ENCODE measurements at regions of chr20 and their contacts with region 1.

Region 1: GRCh38 chr20:52379723-52380336 is 188.3 kb upstream of the ZFP64 start:
- DNase-seq: peak in 3 of 10 donors; percentile 14 to 69 (median 26)

Region 2: GRCh38 chr20:52242237-52243230 is 137.3 kb before region 1 on chr20:
- intact Hi-C with region 1: loop called (anchors 10 kb)
- DNase-seq: no peak

Region 3: GRCh38 chr20:52312132-52312729 is 67.6 kb before region 1 on chr20:
- intact Hi-C with region 1: loop called (anchors 2 kb)
- DNase-seq: peak in 1 of 10 donors; percentile 47

Measured in posterior cingulate gyrus (tissue), 11 donors.